Heart right ventricle (tissue), 16 donors: ENCODE measurements at regions of chr3 and their contacts with region 1.

Region 1: DNA sequence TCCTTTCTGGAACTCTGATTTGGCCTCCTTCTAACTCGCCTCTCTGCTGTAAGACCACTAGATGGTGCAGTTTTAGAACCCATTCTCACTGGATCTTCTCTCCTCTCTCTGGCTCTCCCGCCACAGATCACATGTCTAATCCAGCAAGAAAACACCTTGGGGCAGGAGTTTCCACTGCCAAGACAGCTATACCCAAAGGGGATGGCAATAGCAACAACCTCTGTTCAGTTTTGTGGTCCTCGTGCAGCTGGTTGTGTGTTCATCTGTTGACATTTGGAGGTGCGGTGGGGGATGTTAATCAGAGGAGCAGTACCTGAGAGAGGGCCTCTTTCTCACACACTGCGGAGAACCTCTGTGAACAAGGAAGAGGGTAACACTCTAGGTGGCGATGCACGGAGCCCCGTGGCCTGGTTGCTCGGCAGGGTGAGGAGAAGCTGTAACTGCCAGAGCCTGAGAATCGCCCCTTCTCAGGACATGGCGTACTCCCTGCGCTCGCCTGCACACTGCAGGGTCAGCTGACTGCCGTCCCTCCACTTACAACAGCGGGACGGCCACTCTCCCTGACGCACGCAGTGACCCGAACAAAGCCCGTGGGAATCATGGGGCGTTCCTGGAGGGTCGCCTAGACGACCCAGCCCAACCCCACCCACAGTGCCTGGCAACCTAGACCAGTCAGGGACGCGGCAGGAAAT is at the start of gene TEX55:
- DNase-seq: peak; percentile 8 to 39
- ATAC-seq: peak in 7 of 8 donors; percentile 44 to 92 (median 78)
- H3K4me3 ChIP-seq: no peak within 1 kb of the TSS
- H3K27ac ChIP-seq: no peak within 1 kb of the TSS
- H3K4me1 ChIP-seq: no peaks in the 10 kb centered on the region
- H3K27me3 ChIP-seq: no peaks in the 10 kb centered on the region
- CTCF ChIP-seq: peak in 7 of 9 donors; percentile 45 to 64 (median 52)
- total RNA-seq, gene TEX55: not detected

Region 2: DNA sequence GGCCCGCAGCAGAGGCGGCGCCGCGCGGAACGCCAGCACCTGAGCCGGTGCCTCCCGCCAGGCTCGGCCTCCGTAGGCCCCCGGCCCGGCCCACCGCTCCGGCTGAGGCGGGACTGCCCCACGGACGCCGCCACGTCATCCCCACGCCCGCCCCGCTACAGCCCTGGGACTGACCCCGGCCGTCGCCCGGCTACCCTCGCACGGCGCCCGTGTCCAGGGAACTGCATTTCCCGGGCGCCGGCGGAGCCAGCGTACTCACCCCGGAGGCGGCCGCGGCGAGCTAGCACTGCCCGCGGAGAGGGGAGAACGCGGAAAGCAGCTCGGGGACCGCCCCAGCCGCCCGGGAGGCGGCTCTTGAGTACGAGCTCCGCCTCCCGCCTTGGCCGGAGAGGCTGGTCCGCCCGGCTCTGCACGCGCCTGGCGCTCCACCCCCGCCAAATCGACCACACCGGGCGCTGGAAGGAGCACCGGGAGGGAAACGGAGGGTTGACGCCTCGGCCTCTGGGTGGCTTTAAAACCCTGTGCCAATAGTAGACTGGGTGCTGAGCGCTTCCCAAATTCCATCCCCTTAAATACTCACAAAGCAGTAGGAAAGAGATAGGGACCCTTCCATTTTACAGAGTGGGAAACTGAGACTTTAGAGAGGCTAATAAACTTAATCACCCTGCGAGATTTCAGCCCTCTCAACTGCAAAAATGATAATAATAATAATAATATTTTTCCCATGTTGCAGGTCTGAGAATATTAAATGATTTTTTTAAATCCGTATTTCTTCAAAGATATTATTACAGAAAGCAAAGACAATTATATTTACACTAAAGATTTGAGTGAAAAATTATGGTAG is 95.2 kb after region 1 on chr3 and contains the start of gene B4GALT4:
- intact Hi-C with region 1: loop called in 1 of 10 experiments (anchors 5 kb)
- DNase-seq: peak; percentile 86 to 89
- ATAC-seq: peak; percentile 95 to 97 (median 96)
- H3K4me3 ChIP-seq: peak within 1 kb of the TSS; percentile 57 to 90 (median 86)
- H3K27ac ChIP-seq: peak within 1 kb of the TSS; percentile 90 to 98 (median 93)
- H3K4me1 ChIP-seq: peaks cover 3 to 50% (median 34%) of the 10 kb centered on the region in 9 donors
- H3K27me3 ChIP-seq: no peaks in the 10 kb centered on the region
- CTCF ChIP-seq: no peak
- total RNA-seq, gene B4GALT4: 9.0 to 14.6 (median 11.6) TPM

Region 3: DNA sequence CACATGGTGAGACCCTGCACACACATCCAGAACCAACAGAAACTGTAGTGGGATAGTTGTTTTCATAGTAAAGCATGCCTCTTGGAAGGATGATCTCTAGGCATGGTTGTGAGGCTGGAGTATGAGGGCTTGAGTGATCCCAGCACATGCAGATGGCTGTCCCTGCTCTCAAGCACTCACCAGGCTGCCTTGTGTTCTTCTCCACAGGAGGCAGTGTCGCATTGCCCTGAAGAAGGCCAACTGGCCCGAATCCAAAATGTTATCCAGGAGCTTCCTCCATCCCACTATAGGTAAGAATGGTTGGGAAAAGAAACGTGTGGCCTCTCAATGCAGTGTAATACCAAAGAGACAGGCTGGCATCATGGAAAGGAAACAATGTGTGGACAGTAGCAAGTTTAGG is 235.1 kb after region 1 on chr3:
- intact Hi-C with region 1: loop called in 1 of 10 experiments (anchors 10 kb)
- DNase-seq: no peak
- ATAC-seq: peak in 3 of 8 donors; percentile 28 to 45 (median 31)
- H3K4me3 ChIP-seq: no peak overlapping the region
- H3K27ac ChIP-seq: no peak overlapping the region
- H3K4me1 ChIP-seq: peaks cover 0 to 16% (median 0%) of the 10 kb centered on the region in 9 donors
- H3K27me3 ChIP-seq: no peaks in the 10 kb centered on the region
- CTCF ChIP-seq: peak in 2 of 9 donors; percentile 11 to 22